ENCODE measurements at regions of chr20 and their contacts with region 1.

Region 1: DNA sequence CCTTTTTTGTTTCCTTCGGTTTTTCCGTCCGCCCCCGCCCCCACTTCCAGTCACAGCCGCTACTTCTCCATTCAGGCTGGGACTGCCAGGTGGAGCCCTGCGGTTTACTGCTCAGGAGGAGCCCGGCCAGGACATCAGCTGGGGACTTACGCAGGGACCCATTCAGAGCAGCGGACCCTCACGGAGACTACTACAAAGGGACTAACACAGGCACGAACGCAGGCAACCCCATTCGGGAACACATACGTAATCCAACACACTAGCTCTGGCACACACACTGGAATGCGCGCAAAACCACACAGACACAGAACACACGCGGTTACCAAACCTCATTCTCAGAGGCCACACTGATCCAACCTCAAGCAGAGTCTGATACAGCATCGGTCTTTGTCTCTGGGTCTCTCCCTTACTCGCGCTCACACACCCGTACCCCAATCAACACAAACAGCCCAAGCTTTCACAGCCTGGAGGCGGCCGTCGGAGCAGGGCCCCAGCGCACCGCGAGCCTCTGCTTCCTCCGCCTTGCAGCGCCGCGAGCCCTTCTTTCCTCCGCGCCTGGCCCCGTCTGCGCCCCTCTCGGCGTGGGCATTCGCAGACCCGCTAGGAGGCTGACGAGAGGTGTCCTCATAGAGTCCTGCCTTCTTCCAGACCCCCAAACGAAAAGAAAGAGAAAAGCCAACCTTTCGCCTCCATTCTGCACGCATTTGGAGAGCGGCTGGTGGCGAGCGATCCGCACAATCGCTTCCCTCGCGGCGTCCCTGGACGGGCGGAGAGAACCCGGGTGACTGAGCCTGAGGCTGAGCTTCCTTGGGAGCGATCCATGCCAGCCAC is 1.1 kb upstream of the SLC32A1 start:
- DNase-seq: peak in 2 of 9 experiments; percentile 17 to 21
- ATAC-seq: no peak
- H3K4me3 ChIP-seq: no peak overlapping the region
- H3K4me3 Mint-ChIP-seq: no peak overlapping the region
- H3K27ac ChIP-seq: no peak overlapping the region
- H3K27ac Mint-ChIP-seq: no peak overlapping the region
- H3K4me1 ChIP-seq: peaks cover 27% of the 10 kb centered on the region
- H3K4me1 Mint-ChIP-seq: peaks cover 37% of the 10 kb centered on the region
- H3K27me3 ChIP-seq: peaks cover 40 to 50% of the 10 kb centered on the region in 2 experiments
- H3K27me3 Mint-ChIP-seq: peaks cover 74% of the 10 kb centered on the region
- CTCF ChIP-seq: no peak

Region 2: GRCh38 chr20:38387953-38388352 is 335.3 kb before region 1 on chr20:
- CTCF ChIA-PET with region 1: no interaction called
- POLR2A ChIA-PET with region 1: no interaction called
- intact Hi-C with region 1: no loop called
- DNase-seq: no peak
- ATAC-seq: no peak
- H3K4me3 ChIP-seq: no peak overlapping the region
- H3K4me3 Mint-ChIP-seq: no peak overlapping the region
- H3K27ac ChIP-seq: no peak overlapping the region
- H3K27ac Mint-ChIP-seq: no peak overlapping the region
- H3K4me1 ChIP-seq: no peaks in the 10 kb centered on the region
- H3K4me1 Mint-ChIP-seq: no peaks in the 10 kb centered on the region
- H3K27me3 ChIP-seq: no peaks in the 10 kb centered on the region
- H3K27me3 Mint-ChIP-seq: peaks cover 10% of the 10 kb centered on the region
- CTCF ChIP-seq: no peak

Region 3: GRCh38 chr20:38692436-38693411 is 30.5 kb before region 1 on chr20:
- CTCF ChIA-PET with region 1: no interaction called
- POLR2A ChIA-PET with region 1: no interaction called
- intact Hi-C with region 1: loop called in 1 of 2 experiments (anchors 2 kb)
- DNase-seq: peak in 8 of 9 experiments; percentile 14 to 63 (median 60)
- ATAC-seq: peak; percentile 57
- H3K4me3 ChIP-seq: no peak overlapping the region
- H3K4me3 Mint-ChIP-seq: no peak overlapping the region
- H3K27ac ChIP-seq: no peak overlapping the region
- H3K27ac Mint-ChIP-seq: no peak overlapping the region
- H3K4me1 ChIP-seq: no peaks in the 10 kb centered on the region
- H3K4me1 Mint-ChIP-seq: no peaks in the 10 kb centered on the region
- H3K27me3 ChIP-seq: peaks cover 0 to 4% of the 10 kb centered on the region in 2 experiments
- H3K27me3 Mint-ChIP-seq: peaks cover 36% of the 10 kb centered on the region
- CTCF ChIP-seq: no peak

Measured in CD8-positive, alpha-beta T cell (primary cell).